Right cardiac atrium (tissue), 5 donors: ENCODE measurements at regions of chr1 and their contacts with region 1.

Region 1: DNA sequence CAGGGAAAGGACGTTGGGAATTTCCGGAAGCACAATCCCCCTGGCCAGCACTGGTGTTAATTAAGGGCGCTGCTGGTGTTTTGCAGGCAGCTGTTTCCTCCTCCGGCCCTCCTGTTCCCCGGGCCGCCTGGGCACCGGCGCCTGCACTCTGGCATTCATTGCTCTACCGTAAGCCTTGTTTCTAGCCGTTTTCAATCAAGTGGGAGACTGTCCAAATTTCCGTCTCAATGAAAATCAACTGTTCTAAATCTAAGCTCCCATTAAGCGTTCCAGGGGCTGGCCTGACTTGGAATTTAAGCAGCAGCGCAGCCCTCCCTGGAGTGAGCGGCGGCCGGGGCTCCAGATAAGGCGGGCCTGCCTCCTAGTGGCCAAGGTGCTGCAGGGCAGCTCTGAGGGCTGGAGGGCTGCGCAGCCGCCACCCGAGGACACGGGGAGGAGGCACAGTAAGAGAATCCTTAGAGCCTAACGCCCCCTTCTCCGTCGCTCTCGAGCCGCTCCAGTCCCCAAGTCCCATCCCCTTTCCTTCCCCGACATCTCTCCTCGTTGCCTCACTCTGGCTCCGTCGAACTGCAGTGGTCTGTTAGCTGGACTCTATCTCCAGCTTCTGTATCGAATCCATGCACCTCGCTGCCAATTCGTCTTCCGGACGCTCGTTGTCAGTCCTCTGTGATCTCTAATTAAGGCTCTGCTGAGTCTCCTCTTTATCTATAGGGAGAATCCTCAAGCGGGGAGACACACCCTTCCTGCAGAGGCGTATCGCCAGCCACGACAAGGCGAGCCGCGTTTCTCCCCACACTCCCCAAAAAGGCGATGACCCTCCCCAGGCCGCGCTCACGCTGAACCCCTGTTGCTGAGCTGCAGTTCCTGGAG is 57.8 kb upstream of the LRRC8D start:
- DNase-seq: peak; percentile 88 to 95 (median 95)
- ATAC-seq: peak; percentile 99
- H3K4me3 ChIP-seq: peak overlapping the region; percentile 69
- H3K27ac ChIP-seq: peak overlapping the region; percentile 32
- H3K4me1 ChIP-seq: peaks cover 4% of the 10 kb centered on the region
- H3K27me3 ChIP-seq: no peaks in the 10 kb centered on the region

Region 2: DNA sequence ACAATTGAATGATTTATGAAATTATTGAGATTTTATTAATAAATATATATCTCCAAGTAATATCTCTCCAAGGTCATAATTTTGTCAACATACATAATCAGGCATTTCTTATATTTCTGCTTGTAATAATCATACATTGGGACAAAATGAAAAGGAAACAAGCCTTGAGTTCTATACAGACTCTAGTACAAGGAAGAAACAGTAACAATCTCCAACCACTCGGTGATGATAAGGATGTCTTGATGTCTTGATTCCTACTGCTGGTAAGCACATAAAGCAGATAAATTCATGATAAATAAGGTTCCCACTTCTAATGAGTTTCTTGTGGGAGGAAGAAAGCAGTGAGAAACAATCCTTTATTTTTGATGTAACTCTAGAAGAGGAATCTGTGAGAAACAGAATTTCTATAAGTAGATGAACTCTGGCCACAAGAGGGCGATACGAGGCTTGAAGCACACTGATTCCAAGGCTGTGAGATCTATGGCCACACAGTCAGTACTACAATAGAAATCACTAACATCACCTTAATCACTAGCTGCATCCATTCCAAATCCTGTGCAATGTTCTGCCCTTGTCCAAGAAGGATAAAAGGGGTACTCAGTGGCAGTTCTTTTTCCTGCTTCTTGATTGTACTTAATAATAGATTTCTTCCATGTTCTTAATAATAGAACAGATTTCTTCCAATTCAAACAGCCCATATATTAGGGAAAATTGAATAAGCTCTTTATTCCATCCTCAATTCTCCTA is 279.8 kb before region 1 on chr1:
- intact Hi-C with region 1: loop called in 3 of 4 experiments (anchors 5 to 10 kb)
- DNase-seq: peak; percentile 66 to 84 (median 71)
- ATAC-seq: peak; percentile 78 to 81
- H3K4me3 ChIP-seq: no peak overlapping the region
- H3K27ac ChIP-seq: no peak overlapping the region
- H3K4me1 ChIP-seq: no peaks in the 10 kb centered on the region
- H3K27me3 ChIP-seq: no peaks in the 10 kb centered on the region

Region 3: DNA sequence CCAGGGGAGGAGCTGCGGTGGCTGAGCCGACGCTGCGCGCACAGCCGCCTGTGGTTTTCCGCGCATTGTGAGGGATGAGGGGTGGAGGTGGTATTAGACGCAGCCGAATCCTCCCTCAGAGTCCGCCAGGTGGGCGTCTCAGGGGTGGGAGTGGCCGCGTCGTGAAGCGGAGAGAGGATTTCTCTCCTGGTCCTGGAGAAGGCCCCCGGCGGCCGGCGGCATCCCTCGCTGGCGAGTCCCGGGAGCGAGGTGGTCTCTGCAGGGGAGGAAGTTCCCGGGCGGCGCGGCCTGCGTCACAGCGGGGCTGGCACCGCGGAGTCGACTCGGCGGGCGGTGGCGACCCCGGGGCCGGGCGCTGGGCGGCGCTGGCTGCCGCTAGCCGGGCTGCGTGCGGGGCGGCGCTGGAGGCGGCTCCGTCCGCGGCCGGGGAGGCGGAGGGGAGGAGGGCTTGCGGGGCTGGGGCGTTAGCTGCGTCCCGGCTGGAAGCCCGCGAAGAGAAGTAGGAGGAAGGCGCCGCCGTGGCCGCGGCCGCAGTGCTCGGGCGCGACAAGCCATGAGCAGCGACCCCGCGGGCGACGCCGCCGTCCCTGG is 130.3 kb before region 1 on chr1 and contains the start of gene LRRC8C:
- intact Hi-C with region 1: loop called (anchors 2 to 10 kb)
- DNase-seq: peak; percentile 89 to 96 (median 95)
- ATAC-seq: peak; percentile 95 to 96
- H3K4me3 ChIP-seq: peak within 1 kb of the TSS; percentile 56
- H3K27ac ChIP-seq: peak within 1 kb of the TSS; percentile 95
- H3K4me1 ChIP-seq: no peaks in the 10 kb centered on the region
- H3K27me3 ChIP-seq: no peaks in the 10 kb centered on the region
- total RNA-seq, gene LRRC8C: 5.9 to 10.6 (median 6.9) TPM

Region 4: GRCh38 chr1:89820422-89821321 is 57.7 kb after region 1 on chr1 and contains the start of gene LRRC8D:
- intact Hi-C with region 1: no loop called
- DNase-seq: peak; percentile 86 to 94 (median 94)
- ATAC-seq: peak; percentile 98
- H3K4me3 ChIP-seq: peak within 1 kb of the TSS; percentile 86
- H3K27ac ChIP-seq: peak within 1 kb of the TSS; percentile 65
- H3K4me1 ChIP-seq: peaks cover 7% of the 10 kb centered on the region
- H3K27me3 ChIP-seq: no peaks in the 10 kb centered on the region
- total RNA-seq, gene LRRC8D: 5.0 to 8.2 (median 7.2) TPM